Heart left ventricle (tissue), 16 donors: ENCODE measurements at regions of chr6 and their contacts with region 1.

Region 1: DNA sequence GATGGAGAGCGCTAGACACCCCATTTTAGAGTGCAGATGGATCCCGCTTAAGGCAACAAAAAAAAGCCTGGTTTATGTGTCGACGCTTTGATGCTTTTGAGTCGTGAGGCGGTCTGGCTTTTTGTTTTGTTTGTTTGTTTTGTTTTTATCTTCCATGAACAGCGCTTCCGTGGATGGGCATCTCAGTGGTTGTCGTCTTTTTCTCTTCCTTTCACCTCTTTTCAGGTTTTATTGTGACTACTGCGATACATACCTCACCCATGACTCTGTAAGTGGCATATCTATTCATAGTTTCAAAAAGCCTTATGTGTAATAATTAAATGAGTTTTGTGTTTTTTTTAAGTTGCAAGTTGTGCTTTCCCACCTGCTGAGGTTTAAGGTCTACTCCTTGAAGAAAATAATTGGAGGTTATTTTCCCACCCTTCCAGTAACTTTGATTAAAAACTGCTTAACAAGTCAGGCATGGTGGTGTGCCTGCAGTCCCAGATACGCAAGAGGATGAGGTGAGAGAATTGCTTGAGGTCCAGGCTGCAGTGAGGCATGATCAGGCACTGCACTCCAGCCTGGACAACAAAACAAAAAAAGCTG is 476 bp downstream of the SNRPC start:
- DNase-seq: no peak
- ATAC-seq: no peak
- H3K4me3 ChIP-seq: peak overlapping the region; percentile 44 to 92 (median 74)
- H3K27ac ChIP-seq: peak overlapping the region; percentile 81 to 99 (median 90)
- H3K4me1 ChIP-seq: peaks cover 0 to 43% (median 27%) of the 10 kb centered on the region in 12 donors
- H3K27me3 ChIP-seq: no peaks in the 10 kb centered on the region
- CTCF ChIP-seq: no peak
- POLR2A ChIP-seq: no peak

Region 2: DNA sequence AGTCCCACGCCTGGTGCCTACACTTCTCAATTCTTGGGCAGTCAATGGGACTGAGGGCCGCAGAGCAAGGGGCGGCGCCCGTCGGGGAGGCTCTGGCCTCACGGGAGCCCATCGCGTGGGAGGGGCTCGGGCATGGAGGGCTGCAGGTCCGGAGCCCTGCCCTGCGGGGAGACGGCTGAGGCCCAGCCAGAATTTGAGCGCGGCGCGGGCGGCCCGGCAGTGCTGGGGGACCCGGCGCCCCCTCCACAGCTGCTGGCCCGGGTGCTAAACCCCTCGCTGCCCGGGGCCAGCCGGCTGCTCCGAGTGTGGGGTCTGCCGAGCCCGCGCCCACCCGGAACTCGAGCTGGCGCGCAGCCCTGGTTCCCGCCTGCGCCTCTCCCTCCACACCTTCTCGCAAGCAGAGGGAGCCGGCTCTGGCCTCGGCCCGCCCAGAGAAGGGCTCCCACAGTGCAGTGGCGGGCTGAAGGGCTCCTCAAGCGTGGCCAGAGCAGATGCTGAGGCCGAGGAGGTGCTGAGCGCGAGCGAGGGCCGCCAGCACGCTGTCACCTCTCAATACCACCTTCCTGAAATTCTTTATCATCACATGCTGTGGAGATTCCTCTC is 1236.2 kb before region 1 on chr6:
- intact Hi-C with region 1: no loop called
- DNase-seq: no peak
- ATAC-seq: no peak
- H3K4me3 ChIP-seq: no peak overlapping the region
- H3K27ac ChIP-seq: no peak overlapping the region
- H3K4me1 ChIP-seq: no peaks in the 10 kb centered on the region
- H3K27me3 ChIP-seq: no peaks in the 10 kb centered on the region
- CTCF ChIP-seq: no peak
- POLR2A ChIP-seq: no peak

Region 3: GRCh38 chr6:34459899-34460593 is 297.7 kb before region 1 on chr6:
- intact Hi-C with region 1: loop called in 1 of 10 experiments (anchors 10 kb)
- DNase-seq: no peak
- ATAC-seq: peak in 2 of 4 donors; percentile 48 to 52
- H3K4me3 ChIP-seq: no peak overlapping the region
- H3K27ac ChIP-seq: no peak overlapping the region
- H3K4me1 ChIP-seq: peaks cover 0 to 12% (median 0%) of the 10 kb centered on the region in 12 donors
- H3K27me3 ChIP-seq: peaks cover 0 to 15% (median 0%) of the 10 kb centered on the region in 9 donors
- CTCF ChIP-seq: peak; percentile 47 to 77 (median 60)
- POLR2A ChIP-seq: no peak

Region 4: DNA sequence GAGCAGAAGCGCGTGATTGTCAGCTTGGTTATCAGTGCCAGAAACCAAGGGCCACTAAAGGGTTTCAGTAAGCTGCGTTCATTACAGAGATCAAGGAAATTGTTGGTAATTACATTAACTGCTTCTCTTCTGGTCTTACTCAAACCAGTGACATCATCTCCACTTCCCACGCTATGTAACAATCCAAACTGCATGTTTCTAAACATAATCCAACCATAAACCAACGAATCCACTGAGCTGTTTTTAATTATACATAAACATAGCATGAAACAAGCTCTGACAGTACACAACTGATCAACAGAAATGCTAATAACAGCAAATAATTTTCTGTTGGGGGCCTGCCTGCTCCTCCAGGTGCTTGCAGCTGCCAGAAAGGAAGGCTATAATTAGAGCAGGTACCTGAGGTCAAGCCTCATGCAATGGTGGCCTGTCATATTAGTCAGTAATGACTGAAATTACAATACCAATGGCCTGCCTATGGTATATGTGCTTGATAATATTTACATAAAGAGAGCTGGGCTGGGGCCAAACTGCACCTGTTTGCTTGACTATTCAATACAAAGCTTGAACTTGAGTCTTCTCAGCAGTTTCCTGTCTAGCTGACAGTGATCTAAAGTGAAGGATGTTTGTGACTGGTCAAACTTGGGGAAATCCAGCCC is 101.3 kb before region 1 on chr6:
- intact Hi-C with region 1: loop called in 1 of 10 experiments (anchors 5 kb)
- DNase-seq: no peak
- ATAC-seq: peak; percentile 43 to 65 (median 56)
- H3K4me3 ChIP-seq: peak overlapping the region in 10 of 12 donors; percentile 34 to 63 (median 50)
- H3K27ac ChIP-seq: peak overlapping the region; percentile 89 to 98 (median 92)
- H3K4me1 ChIP-seq: peaks cover 6 to 71% (median 35%) of the 10 kb centered on the region in 12 donors
- H3K27me3 ChIP-seq: no peaks in the 10 kb centered on the region
- CTCF ChIP-seq: no peak
- POLR2A ChIP-seq: no peak

Region 5: GRCh38 chr6:34696739-34697543 is 60.8 kb before region 1 on chr6 and contains the start of gene ILRUN:
- intact Hi-C with region 1: loop called in 8 of 10 experiments (anchors 2 to 5 kb)
- DNase-seq: peak; percentile 96 to 99 (median 98)
- ATAC-seq: peak; percentile 89 to 96 (median 96)
- H3K4me3 ChIP-seq: peak within 1 kb of the TSS; percentile 81 to 99 (median 93)
- H3K27ac ChIP-seq: peak within 1 kb of the TSS; percentile 84 to 99 (median 96)
- H3K4me1 ChIP-seq: peaks cover 7 to 45% (median 29%) of the 10 kb centered on the region in 12 donors
- H3K27me3 ChIP-seq: no peaks in the 10 kb centered on the region
- CTCF ChIP-seq: no peak
- POLR2A ChIP-seq: peak in 1 of 2 donors; percentile 90
- total RNA-seq, gene ILRUN: 91.2 to 191 (median 116) TPM

Region 6: DNA sequence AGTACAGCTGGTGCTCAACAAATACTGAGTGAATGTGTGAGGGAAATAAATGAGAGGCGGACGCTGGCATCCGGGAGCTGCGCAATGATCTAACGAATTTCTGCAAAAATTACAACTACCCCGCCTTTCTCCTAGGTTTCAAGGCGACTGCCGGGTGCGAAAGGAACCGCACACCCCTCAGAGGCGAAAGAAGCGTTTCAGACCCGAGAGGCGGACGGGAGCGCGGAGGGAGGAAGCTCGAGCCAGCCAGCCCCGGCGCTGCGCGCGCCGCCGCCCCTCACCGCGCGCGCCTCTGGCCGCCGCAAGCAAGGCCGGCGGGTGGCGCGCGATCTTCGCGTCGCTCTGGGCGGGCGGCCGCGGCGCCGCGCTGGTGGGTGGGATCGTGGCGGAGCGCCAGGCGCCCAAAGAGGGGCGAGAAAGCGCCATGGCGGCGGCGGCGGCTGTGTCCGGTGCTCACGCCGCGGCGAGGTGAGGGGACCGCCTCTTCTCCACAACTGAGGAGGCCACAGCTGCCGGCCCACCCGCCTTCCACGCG is 34.0 kb after region 1 on chr6 and contains the start of gene BLTP3A:
- intact Hi-C with region 1: loop called in 5 of 10 experiments (anchors 1 to 5 kb)
- DNase-seq: peak; percentile 68 to 89 (median 83)
- ATAC-seq: peak; percentile 75 to 95 (median 91)
- H3K4me3 ChIP-seq: peak within 1 kb of the TSS; percentile 73 to 99 (median 94)
- H3K27ac ChIP-seq: peak within 1 kb of the TSS; percentile 85 to 98 (median 96)
- H3K4me1 ChIP-seq: peaks cover 0 to 36% (median 16%) of the 10 kb centered on the region in 12 donors
- H3K27me3 ChIP-seq: no peaks in the 10 kb centered on the region
- CTCF ChIP-seq: peak in 1 of 12 donors; percentile 0
- POLR2A ChIP-seq: peak; percentile 28 to 36
- total RNA-seq, gene BLTP3A: 16.5 to 36.8 (median 22.4) TPM

Region 7: DNA sequence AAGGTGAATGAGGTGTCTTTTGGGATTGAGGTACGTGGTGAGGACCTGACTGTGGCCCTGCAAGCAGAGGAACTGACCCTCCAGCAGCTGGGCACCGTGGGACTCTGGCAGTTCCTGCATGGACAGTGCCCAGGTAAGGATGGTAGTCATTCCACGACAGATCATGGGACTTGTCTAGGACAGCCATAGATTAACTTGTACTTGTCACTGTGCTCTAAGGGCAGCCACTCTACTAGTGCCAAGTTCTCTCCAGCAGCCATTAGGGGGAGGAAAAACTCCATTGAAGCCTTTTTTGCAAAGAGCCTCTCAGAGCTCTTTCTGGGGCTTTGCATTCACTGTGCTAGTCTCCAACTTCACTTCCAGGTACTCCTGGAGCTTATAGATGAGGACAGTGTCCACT is 109.7 kb after region 1 on chr6:
- intact Hi-C with region 1: loop called in 1 of 10 experiments (anchors 10 kb)
- DNase-seq: no peak
- ATAC-seq: peak; percentile 30 to 63 (median 49)
- H3K4me3 ChIP-seq: no peak overlapping the region
- H3K27ac ChIP-seq: peak overlapping the region in 6 of 12 donors; percentile 17 to 58 (median 40)
- H3K4me1 ChIP-seq: peaks cover 0 to 35% (median 9%) of the 10 kb centered on the region in 12 donors
- H3K27me3 ChIP-seq: no peaks in the 10 kb centered on the region
- CTCF ChIP-seq: peak in 8 of 12 donors; percentile 18 to 43 (median 26)
- POLR2A ChIP-seq: no peak

Region 8: GRCh38 chr6:34887753-34888513 is 130.2 kb after region 1 on chr6 and contains the start of gene TAF11:
- intact Hi-C with region 1: loop called in 2 of 10 experiments (anchors 5 to 10 kb)
- DNase-seq: peak; percentile 94 to 96 (median 95)
- ATAC-seq: peak; percentile 91 to 96 (median 94)
- H3K4me3 ChIP-seq: peak within 1 kb of the TSS; percentile 65 to 95 (median 83)
- H3K27ac ChIP-seq: peak within 1 kb of the TSS; percentile 11 to 93 (median 80)
- H3K4me1 ChIP-seq: peaks cover 0 to 55% (median 24%) of the 10 kb centered on the region in 12 donors
- H3K27me3 ChIP-seq: no peaks in the 10 kb centered on the region
- CTCF ChIP-seq: no peak
- POLR2A ChIP-seq: peak in 1 of 2 donors; percentile 67
- total RNA-seq, gene TAF11: 14.6 to 25.9 (median 19.9) TPM